ENCODE measurements at regions of chr16 and their contacts with region 1.

Region 1: GRCh38 chr16:31325171-31325570 is 29.8 kb upstream of the ITGAX start:
- DNase-seq: no peak
- ATAC-seq: no peak
- H3K4me3 ChIP-seq: no peak overlapping the region
- H3K27ac ChIP-seq: no peak overlapping the region
- H3K4me1 ChIP-seq: no peaks in the 10 kb centered on the region
- H3K27me3 ChIP-seq: peaks cover 12% of the 10 kb centered on the region
- CTCF ChIP-seq: no peak

Region 2: GRCh38 chr16:31273676-31274075 is 51.5 kb before region 1 on chr16:
- CTCF ChIA-PET with region 1: no interaction called
- POLR2A ChIA-PET with region 1: interaction called, 14 read pairs
- intact Hi-C with region 1: no loop called
- DNase-seq: no peak
- ATAC-seq: no peak
- H3K4me3 ChIP-seq: no peak overlapping the region
- H3K27ac ChIP-seq: no peak overlapping the region
- H3K4me1 ChIP-seq: no peaks in the 10 kb centered on the region
- H3K27me3 ChIP-seq: no peaks in the 10 kb centered on the region; the same call in 1 of the 2 replicates
- CTCF ChIP-seq: no peak

Measured in PC-3 (cell line).